HepG2 (cell line): ENCODE measurements at regions of chr1 and their contacts with region 1.

Region 1: DNA sequence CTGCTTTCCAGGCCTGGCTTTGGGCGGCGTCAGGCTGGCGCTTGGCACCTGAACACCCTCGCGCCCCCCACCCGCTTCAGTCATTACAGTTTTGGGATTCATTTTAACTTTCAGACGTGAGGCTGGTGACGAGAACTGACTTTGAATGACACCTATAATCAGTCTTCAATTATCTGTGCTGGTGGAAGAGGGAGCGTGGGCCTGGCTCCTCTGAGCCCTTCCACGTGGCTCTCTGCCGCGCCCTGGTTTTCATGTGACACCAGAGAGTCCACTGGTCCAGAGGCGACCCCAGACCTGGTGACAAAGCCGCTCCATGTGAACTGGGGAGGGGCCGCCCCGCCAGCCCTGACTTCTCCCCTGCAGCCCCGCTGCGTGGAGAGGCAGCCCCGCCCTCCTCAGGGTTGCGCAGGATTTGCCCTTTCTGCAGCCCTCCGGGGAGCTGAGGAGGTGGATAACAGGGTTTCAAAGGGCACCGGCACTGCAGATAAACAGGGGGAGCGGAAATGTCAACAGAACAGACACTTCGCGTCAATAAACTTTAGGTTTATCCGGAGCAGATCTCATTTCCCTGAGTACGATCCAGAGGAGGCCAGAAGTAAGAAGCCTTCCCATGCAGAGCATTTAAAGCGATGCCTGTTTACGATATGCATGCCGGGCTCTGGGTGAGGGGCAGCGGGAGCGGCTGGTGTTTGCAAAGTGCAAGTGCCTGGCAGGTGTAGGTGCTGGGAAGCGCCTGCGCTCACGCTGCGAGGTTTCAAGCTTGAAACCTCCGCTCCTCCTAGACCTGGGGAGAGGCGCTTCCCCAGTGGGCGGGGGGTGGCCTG is 56.4 kb downstream of the AJAP1 start:
- DNase-seq: peak; percentile 53
- ATAC-seq: peak; percentile 75
- H3K4me3 ChIP-seq: 0 out of 6 replicates have a peak overlapping the region, but pooled peaks of 1 of the 3 experiments have one; percentile 1
- H3K27ac ChIP-seq: no peak overlapping the region
- H3K4me1 ChIP-seq: peaks cover 15% of the 10 kb centered on the region
- H3K27me3 ChIP-seq: no peaks in the 10 kb centered on the region; a peak in 2 of 5 replicates
- CTCF ChIP-seq: no peak
- EP300 ChIP-seq: no peak
- POLR2A ChIP-seq: no peak
- RAD21 ChIP-seq: no peak

Region 2: GRCh38 chr1:4724695-4725250 is 14.0 kb after region 1 on chr1:
- CTCF ChIA-PET with region 1: no interaction called
- POLR2A ChIA-PET with region 1: no interaction called
- in situ Hi-C with region 1: no loop called
- intact Hi-C with region 1: loop called (anchors 1 kb)
- DNase-seq: no peak
- ATAC-seq: no peak
- H3K4me3 ChIP-seq: no peak overlapping the region
- H3K27ac ChIP-seq: no peak overlapping the region
- H3K4me1 ChIP-seq: no peaks in the 10 kb centered on the region
- H3K27me3 ChIP-seq: peaks cover 0 to 1% of the 10 kb centered on the region in 2 experiments; a peak in 2 of 5 replicates
- CTCF ChIP-seq: no peak
- EP300 ChIP-seq: no peak
- POLR2A ChIP-seq: no peak
- RAD21 ChIP-seq: no peak